GM12878 (cell line): ENCODE measurements at regions of chr10 and their contacts with region 1.

Region 1: DNA sequence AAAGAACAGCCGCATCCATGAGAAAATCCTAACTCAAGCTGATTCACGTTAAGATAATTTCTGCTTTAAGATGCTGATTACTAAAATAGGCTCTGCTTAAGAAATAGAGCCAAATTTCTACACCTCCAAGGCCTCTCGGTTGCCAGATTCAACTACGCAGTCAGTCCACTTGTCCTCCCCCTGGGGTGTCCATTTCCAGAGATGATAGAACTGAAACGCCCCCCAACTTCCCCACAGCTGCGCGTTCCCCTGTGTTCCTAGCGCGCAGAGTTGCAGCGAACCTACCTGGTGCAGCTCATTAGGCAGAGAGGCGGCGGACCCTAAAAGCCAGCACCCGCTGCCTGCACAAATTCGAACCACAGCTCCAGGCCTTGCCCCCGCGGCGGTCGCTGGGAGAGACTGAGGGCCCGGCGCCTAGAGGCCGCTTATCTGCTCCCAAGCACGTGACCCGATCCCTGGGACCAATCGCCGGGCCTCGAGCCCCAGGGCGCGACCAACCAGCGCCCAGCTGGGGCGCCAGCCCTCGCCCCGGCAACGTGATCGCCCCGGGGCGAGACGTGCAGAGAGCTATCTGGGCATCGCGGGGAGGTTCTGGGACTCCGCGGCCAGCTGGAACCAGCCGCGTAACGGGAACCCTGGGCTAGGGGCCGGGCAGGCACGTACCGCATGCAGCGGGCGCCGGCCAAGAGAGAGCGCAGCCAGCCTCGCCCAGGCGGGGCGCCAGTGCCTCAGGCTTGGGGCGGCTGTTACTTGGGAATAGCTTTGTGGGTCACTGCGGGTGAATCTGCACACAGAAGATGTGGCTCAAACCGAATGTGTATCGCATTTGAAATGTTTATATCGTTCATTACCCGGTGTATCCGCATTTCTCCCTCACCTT is at the start of gene PPP1R3C:
- DNase-seq: no peak
- ATAC-seq: peak; percentile 43
- H3K4me3 ChIP-seq: peak within 1 kb of the TSS; percentile 36; the same call in 1 of the 2 replicates
- H3K27ac ChIP-seq: no peak within 1 kb of the TSS
- H3K4me1 ChIP-seq: no peaks in the 10 kb centered on the region
- H3K27me3 ChIP-seq: peaks cover 3 to 7% of the 10 kb centered on the region in 2 experiments; a peak in 3 of 4 replicates
- CTCF ChIP-seq: 0 out of 6 replicates have a peak, but pooled peaks of 1 of the 3 experiments have one; percentile 4
- EP300 ChIP-seq: no peak
- POLR2A ChIP-seq: no peak
- RAD21 ChIP-seq: no peak
- polyA plus RNA-seq, gene PPP1R3C: not detected

Region 2: DNA sequence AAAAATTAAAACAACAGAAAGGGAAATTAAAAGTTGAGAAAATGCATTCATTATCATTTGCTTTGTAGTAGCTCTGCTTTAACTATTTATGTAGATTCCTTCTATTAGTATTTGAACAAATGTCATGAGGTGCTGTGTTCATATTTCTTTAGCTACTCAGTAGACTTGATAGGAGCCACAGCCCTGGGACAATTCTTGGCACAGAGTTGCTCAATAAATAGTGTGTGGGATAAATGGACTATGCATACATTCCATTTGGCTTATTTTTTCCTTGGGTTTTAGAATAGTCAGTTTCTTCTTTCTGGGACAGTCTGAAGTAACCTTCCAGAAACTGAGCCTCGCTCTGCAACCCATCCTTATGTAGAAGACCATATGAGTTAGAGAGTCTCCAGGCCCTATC is 747.7 kb before region 1 on chr10:
- CTCF ChIA-PET with region 1: interaction called, 8 read pairs
- POLR2A ChIA-PET with region 1: no interaction called
- RAD21 ChIA-PET with region 1: no interaction called
- SMC1A ChIA-PET with region 1: interaction called, 5 read pairs
- in situ Hi-C with region 1: no loop called
- intact Hi-C with region 1: loop called (anchors 10 kb)
- DNase-seq: no peak
- ATAC-seq: no peak
- H3K4me3 ChIP-seq: no peak overlapping the region
- H3K27ac ChIP-seq: no peak overlapping the region
- H3K4me1 ChIP-seq: no peaks in the 10 kb centered on the region
- H3K27me3 ChIP-seq: no peaks in the 10 kb centered on the region
- CTCF ChIP-seq: no peak
- EP300 ChIP-seq: no peak
- POLR2A ChIP-seq: no peak
- RAD21 ChIP-seq: no peak

Region 3: DNA sequence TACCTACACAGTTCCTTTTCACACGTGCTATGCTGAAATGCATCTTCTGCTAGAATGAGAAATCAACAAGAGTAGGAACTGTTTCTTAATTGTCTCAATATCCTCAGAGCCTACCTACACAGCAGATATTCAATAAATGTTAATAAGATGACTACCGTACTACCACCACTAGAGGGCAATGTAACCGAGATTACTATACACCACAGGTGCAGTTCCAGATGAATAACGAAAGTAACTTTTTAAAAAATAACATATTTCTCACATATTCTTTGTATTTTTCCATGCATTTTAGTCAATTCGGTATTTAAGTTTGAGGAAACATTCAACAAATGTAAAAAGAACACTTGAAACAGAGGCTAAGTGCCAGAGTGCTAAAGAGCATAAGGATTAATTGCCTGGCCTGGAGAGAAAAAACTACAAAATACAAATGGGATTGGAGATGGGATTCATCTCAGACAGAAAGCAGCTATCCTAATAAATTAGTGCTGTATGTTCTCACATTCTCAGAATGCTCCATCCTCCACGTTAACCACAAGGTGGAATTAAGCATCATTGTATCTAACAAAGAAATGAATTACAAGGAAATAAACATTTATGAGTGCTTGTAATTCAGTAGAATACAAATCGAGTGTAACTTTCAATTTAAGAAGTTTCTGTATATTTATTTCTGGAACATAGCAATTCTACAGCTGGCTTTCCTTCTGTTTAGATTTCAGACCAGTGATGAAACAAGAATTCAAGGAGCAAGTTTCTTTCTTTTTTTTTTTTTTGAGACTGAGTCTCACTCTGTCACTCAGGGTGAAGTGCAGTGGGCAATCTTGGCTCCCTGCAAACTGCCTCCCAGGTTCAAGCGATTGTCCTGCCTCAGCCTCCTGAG is 243.0 kb before region 1 on chr10:
- CTCF ChIA-PET with region 1: interaction called, 36 read pairs
- POLR2A ChIA-PET with region 1: no interaction called
- RAD21 ChIA-PET with region 1: interaction called, 5 read pairs
- SMC1A ChIA-PET with region 1: interaction called, 11 read pairs
- in situ Hi-C with region 1: no loop called
- intact Hi-C with region 1: loop called (anchors 2 kb)
- DNase-seq: no peak
- ATAC-seq: peak; percentile 97
- H3K4me3 ChIP-seq: no peak overlapping the region
- H3K27ac ChIP-seq: no peak overlapping the region
- H3K4me1 ChIP-seq: no peaks in the 10 kb centered on the region
- H3K27me3 ChIP-seq: peaks cover 0 to 2% of the 10 kb centered on the region in 2 experiments; a peak in 1 of 4 replicates
- CTCF ChIP-seq: peak; percentile 40 to 51 (median 50); a peak in 5 of 6 replicates
- EP300 ChIP-seq: no peak
- POLR2A ChIP-seq: no peak
- RAD21 ChIP-seq: peak; percentile 59

Region 4: DNA sequence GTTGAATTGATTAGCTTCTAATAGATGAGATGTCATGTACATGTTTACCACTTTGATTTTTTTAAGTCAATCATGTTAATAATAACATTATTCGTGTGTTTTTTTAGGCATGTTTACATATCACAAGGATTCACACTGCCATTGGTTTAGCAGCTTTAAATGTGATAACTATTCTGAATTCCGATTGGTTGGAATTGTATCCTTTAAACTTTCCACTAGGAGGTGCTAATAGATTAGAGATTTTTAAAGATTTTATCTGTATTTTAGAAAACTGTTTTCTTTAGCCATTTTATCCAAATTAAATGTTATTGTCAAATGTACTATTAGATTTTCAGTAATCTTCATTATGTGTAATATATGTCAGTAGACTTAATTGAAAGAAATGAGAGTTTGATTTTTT is 139.6 kb before region 1 on chr10:
- CTCF ChIA-PET with region 1: interaction called, 65 read pairs
- POLR2A ChIA-PET with region 1: no interaction called
- RAD21 ChIA-PET with region 1: interaction called, 19 read pairs
- SMC1A ChIA-PET with region 1: interaction called, 11 read pairs
- in situ Hi-C with region 1: no loop called
- intact Hi-C with region 1: loop called (anchors 2 kb)
- DNase-seq: no peak
- ATAC-seq: peak; percentile 47; the same call in 2 of the 3 replicates
- H3K4me3 ChIP-seq: no peak overlapping the region
- H3K27ac ChIP-seq: no peak overlapping the region
- H3K4me1 ChIP-seq: no peaks in the 10 kb centered on the region
- H3K27me3 ChIP-seq: no peaks in the 10 kb centered on the region
- CTCF ChIP-seq: peak in 1 of 3 experiments; percentile 14; a peak in 2 of 6 replicates
- EP300 ChIP-seq: no peak
- POLR2A ChIP-seq: no peak
- RAD21 ChIP-seq: no peak

Region 5: DNA sequence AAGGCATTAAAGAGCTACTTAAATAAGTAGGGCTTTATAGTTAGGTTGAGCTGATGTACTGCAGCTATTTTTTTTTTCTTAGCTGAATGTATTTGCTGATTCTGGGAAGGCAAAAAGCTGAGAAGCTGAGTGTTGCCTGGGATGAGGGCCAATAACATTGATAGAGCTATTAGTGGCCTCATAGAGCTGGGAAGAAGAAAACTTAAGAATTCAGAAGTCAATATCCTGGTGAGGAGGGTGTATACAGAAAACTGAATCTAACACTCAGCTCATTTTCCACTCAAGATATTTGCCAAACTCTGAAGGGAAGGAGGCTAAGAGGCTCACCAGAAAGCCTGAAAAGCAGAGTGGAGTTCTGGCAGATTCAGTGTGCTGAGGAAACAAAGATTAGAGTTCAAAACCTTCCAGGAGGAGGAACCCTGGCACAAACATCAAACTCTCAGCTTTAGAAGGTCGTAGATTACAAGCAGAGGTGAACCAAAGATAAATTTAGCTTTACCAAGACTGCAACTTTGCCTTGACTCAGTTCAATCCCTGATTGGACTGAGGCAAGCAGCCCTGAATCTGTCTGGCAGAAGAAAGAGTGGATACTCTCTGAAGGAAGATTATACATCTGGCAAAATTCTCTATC is 11.3 kb before region 1 on chr10:
- CTCF ChIA-PET with region 1: interaction called, 11 read pairs
- POLR2A ChIA-PET with region 1: interaction called, 5 read pairs
- RAD21 ChIA-PET with region 1: no interaction called
- SMC1A ChIA-PET with region 1: interaction called, 10 read pairs
- in situ Hi-C with region 1: no loop called
- intact Hi-C with region 1: no loop called
- DNase-seq: no peak
- ATAC-seq: no peak
- H3K4me3 ChIP-seq: no peak overlapping the region
- H3K27ac ChIP-seq: no peak overlapping the region
- H3K4me1 ChIP-seq: no peaks in the 10 kb centered on the region
- H3K27me3 ChIP-seq: no peaks in the 10 kb centered on the region; a peak in 1 of 4 replicates
- CTCF ChIP-seq: no peak
- EP300 ChIP-seq: no peak
- POLR2A ChIP-seq: no peak
- RAD21 ChIP-seq: no peak

Region 6: GRCh38 chr10:91643700-91644099 is 10.8 kb after region 1 on chr10:
- CTCF ChIA-PET with region 1: interaction called, 15 read pairs
- POLR2A ChIA-PET with region 1: no interaction called
- RAD21 ChIA-PET with region 1: no interaction called
- SMC1A ChIA-PET with region 1: interaction called, 3 read pairs
- in situ Hi-C with region 1: no loop called
- intact Hi-C with region 1: no loop called
- DNase-seq: no peak
- ATAC-seq: no peak
- H3K4me3 ChIP-seq: no peak overlapping the region
- H3K27ac ChIP-seq: no peak overlapping the region
- H3K4me1 ChIP-seq: no peaks in the 10 kb centered on the region
- H3K27me3 ChIP-seq: no peaks in the 10 kb centered on the region
- CTCF ChIP-seq: peak in 2 of 3 experiments; percentile 15 to 20; a peak in 1 of 6 replicates
- EP300 ChIP-seq: no peak
- POLR2A ChIP-seq: no peak
- RAD21 ChIP-seq: no peak

Region 7: DNA sequence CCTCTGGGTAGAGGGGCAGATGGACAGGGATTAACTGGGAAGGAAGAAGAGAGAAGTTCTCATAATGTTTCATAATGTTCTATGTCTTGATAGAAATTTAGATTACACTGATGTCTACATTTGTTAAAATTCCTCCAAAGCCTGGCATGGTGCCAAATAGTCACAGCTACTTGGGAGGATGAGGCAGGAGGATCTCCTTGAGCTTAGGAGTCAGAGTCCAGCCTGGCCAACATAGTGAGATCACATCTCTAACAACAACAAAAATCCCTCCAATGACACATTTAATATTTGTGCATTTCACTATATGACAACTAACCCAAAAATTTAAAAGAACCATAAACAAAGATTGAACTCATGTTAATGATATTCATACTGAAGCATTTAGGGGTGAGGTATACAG is 32.9 kb after region 1 on chr10:
- CTCF ChIA-PET with region 1: no interaction called
- POLR2A ChIA-PET with region 1: no interaction called
- RAD21 ChIA-PET with region 1: no interaction called
- SMC1A ChIA-PET with region 1: no interaction called
- in situ Hi-C with region 1: no loop called
- intact Hi-C with region 1: no loop called
- DNase-seq: no peak
- ATAC-seq: no peak
- H3K4me3 ChIP-seq: no peak overlapping the region
- H3K27ac ChIP-seq: no peak overlapping the region
- H3K4me1 ChIP-seq: no peaks in the 10 kb centered on the region
- H3K27me3 ChIP-seq: no peaks in the 10 kb centered on the region
- CTCF ChIP-seq: no peak
- EP300 ChIP-seq: no peak
- POLR2A ChIP-seq: no peak
- RAD21 ChIP-seq: no peak